CD4-positive, alpha-beta memory T cell (primary cell): ENCODE measurements at regions of chr6 and their contacts with region 1.

Region 1: DNA sequence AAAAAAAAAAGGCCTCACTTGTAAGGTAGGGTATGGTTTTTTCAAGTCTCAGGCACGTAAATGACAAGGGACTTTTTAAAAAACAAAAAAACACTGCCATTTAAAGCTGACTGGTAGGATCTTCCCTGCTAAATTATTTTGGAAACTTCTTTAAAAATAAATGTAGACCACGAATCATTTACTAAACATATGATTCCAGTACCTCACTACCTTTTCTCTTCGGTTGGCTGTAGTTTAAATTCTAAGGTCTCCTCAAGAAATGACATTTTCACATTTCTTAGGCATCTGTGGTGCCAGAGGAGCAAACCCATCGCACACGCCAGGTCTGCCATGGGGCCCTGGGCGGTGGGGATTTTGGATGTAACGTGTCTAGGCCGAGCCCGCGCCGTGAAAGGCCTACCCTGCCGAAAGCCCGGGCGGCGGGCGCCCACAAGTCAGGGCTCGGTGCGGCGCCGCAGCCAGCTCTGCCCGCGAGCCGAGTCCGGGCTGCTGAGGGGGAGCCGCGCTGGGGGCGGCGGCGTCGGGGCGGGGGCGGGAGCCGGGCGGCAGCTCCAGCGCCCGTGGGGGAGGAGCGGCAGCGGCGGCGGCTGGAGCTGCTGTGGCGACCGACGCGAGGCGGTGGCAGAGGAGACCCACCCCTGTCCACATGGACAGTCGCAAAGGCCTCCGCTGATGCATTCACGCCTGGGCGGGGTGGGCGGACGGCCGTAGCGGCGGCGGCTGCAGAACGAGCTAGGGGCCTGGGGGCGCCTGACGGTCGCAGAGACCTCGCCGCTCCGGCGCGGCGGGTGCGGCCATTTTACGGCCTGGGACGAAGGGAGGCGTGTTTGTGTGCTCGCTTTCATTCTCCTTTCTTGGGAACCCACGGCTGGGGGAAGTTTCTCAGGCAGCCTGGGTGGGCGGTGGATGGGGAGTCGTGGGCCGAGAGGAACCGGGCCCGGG is at the start of gene SENP6:
- DNase-seq: peak; percentile 78 to 84 (median 81)
- H3K4me3 ChIP-seq: peak within 1 kb of the TSS; percentile 55 to 83
- H3K4me3 Mint-ChIP-seq: peak within 1 kb of the TSS; percentile 95 to 100 (median 98)
- H3K27ac ChIP-seq: peak within 1 kb of the TSS; percentile 96
- H3K27ac Mint-ChIP-seq: peak within 1 kb of the TSS; percentile 97 to 100 (median 98)
- H3K4me1 ChIP-seq: peaks cover 52% of the 10 kb centered on the region
- H3K4me1 Mint-ChIP-seq: peaks cover 43 to 75% (median 60%) of the 10 kb centered on the region in 4 donors
- H3K27me3 ChIP-seq: no peaks in the 10 kb centered on the region
- H3K27me3 Mint-ChIP-seq: no peaks in the 10 kb centered on the region
- total RNA-seq, gene SENP6: 131 to 134 TPM

Region 2: GRCh38 chr6:75243333-75244062 is 358.1 kb before region 1 on chr6 and contains the start of gene COX7A2:
- CTCF ChIA-PET with region 1: no interaction called
- POLR2A ChIA-PET with region 1: interaction called, 24 read pairs
- intact Hi-C with region 1: loop called (anchors 1 kb)
- DNase-seq: peak; percentile 84 to 92 (median 87)
- H3K4me3 ChIP-seq: peak within 1 kb of the TSS; percentile 90 to 93
- H3K4me3 Mint-ChIP-seq: peak within 1 kb of the TSS; percentile 96 to 99 (median 98)
- H3K27ac ChIP-seq: peak within 1 kb of the TSS; percentile 96
- H3K27ac Mint-ChIP-seq: peak within 1 kb of the TSS; percentile 91 to 100 (median 99)
- H3K4me1 ChIP-seq: peaks cover 24% of the 10 kb centered on the region
- H3K4me1 Mint-ChIP-seq: peaks cover 14 to 47% (median 24%) of the 10 kb centered on the region in 4 donors
- H3K27me3 ChIP-seq: no peaks in the 10 kb centered on the region
- H3K27me3 Mint-ChIP-seq: peaks cover 4 to 9% of the 10 kb centered on the region in 2 donors
- total RNA-seq, gene COX7A2: 188 to 201 TPM

Region 3: GRCh38 chr6:75611702-75612375 is 10.3 kb after region 1 on chr6:
- CTCF ChIA-PET with region 1: interaction called, 3 read pairs
- POLR2A ChIA-PET with region 1: interaction called, 46 read pairs
- intact Hi-C with region 1: loop called (anchors 1 kb)
- DNase-seq: peak in 1 of 5 donors; percentile 67
- H3K4me3 ChIP-seq: no peak overlapping the region
- H3K4me3 Mint-ChIP-seq: peak overlapping the region in 7 of 8 donors; percentile 65 to 88 (median 78)
- H3K27ac ChIP-seq: no peak overlapping the region
- H3K27ac Mint-ChIP-seq: peak overlapping the region in 6 of 7 donors; percentile 5 to 71 (median 52)
- H3K4me1 ChIP-seq: peaks cover 85% of the 10 kb centered on the region
- H3K4me1 Mint-ChIP-seq: peaks cover 69 to 97% (median 81%) of the 10 kb centered on the region in 4 donors
- H3K27me3 ChIP-seq: no peaks in the 10 kb centered on the region
- H3K27me3 Mint-ChIP-seq: no peaks in the 10 kb centered on the region

Region 4: GRCh38 chr6:75620381-75621304 is 19.1 kb after region 1 on chr6:
- CTCF ChIA-PET with region 1: no interaction called
- POLR2A ChIA-PET with region 1: interaction called, 46 read pairs
- intact Hi-C with region 1: no loop called
- DNase-seq: no peak
- H3K4me3 ChIP-seq: no peak overlapping the region
- H3K4me3 Mint-ChIP-seq: peak overlapping the region in 5 of 8 donors; percentile 17 to 68 (median 34)
- H3K27ac ChIP-seq: no peak overlapping the region
- H3K27ac Mint-ChIP-seq: peak overlapping the region; percentile 15 to 86 (median 75)
- H3K4me1 ChIP-seq: peaks cover 48% of the 10 kb centered on the region
- H3K4me1 Mint-ChIP-seq: peaks cover 32 to 65% (median 50%) of the 10 kb centered on the region in 4 donors
- H3K27me3 ChIP-seq: no peaks in the 10 kb centered on the region
- H3K27me3 Mint-ChIP-seq: no peaks in the 10 kb centered on the region

Region 5: DNA sequence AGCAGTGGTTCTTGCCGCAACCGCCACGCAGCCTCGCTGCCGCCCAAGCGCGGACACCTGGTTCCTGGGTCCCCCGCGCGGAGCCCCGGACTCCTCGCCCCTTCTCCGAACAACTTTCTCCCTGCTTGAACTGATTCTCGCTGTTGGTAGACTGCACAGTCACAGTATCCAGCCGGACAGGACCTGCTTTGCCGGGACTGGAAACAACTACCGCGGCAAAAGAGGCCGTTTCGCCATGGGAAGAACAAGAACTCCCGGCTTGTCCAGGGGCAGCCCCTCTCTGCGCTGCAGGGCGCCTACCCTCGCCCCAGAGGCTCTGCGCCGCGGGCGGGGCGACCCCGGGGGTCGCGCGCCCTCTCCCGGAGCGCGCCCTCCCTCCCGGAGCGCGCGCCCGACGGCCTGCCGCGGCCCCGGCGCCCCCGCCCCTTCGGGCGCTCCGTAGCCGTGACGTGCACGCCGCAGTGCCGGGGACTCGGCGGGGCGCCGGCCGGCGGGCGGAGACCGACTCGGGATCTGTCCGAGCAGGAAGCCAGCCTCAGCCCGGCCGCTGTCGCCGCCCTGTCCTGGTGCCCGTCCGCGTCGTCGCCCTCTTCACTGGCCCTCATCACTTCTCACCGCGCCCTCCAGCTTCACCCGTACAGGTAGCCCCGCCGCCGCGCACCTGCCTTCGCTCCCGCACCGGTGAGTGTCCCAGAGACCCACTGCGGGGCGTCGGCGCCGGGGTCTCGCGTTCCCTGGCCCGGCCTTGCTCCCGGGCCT is 147.3 kb after region 1 on chr6 and contains the start of gene MYO6:
- CTCF ChIA-PET with region 1: no interaction called
- POLR2A ChIA-PET with region 1: no interaction called
- intact Hi-C with region 1: loop called (anchors 5 kb)
- DNase-seq: peak; percentile 45 to 54 (median 50)
- H3K4me3 ChIP-seq: peak within 1 kb of the TSS; percentile 69 to 78
- H3K4me3 Mint-ChIP-seq: peak within 1 kb of the TSS; percentile 92 to 98 (median 96)
- H3K27ac ChIP-seq: peak within 1 kb of the TSS; percentile 38
- H3K27ac Mint-ChIP-seq: peak within 1 kb of the TSS; percentile 79 to 89 (median 85)
- H3K4me1 ChIP-seq: peaks cover 13% of the 10 kb centered on the region
- H3K4me1 Mint-ChIP-seq: peaks cover 5 to 14% (median 11%) of the 10 kb centered on the region in 4 donors
- H3K27me3 ChIP-seq: no peaks in the 10 kb centered on the region
- H3K27me3 Mint-ChIP-seq: peaks cover 10 to 21% of the 10 kb centered on the region in 2 donors
- total RNA-seq, gene MYO6: 4.1 to 4.4 TPM